Spleen (tissue), 13 donors: ENCODE measurements at regions of chr19 and their contacts with region 1.

Region 1: GRCh38 chr19:984165-984967 is at the start of gene WDR18:
- DNase-seq: peak; percentile 99
- H3K4me3 ChIP-seq: peak within 1 kb of the TSS; percentile 86 to 99 (median 96)
- H3K27ac ChIP-seq: peak within 1 kb of the TSS; percentile 55 to 95 (median 84)
- H3K4me1 ChIP-seq: peaks cover 16 to 50% (median 36%) of the 10 kb centered on the region in 6 donors
- H3K27me3 ChIP-seq: peaks cover 0 to 2% (median 0%) of the 10 kb centered on the region in 7 donors
- CTCF ChIP-seq: peak in 9 of 11 experiments; percentile 32 to 80 (median 60)
- POLR2A ChIP-seq: peak in 1 of 3 donors; percentile 9
- total RNA-seq, gene WDR18: 17.8 to 63.4 (median 28.2) TPM

Region 2: DNA sequence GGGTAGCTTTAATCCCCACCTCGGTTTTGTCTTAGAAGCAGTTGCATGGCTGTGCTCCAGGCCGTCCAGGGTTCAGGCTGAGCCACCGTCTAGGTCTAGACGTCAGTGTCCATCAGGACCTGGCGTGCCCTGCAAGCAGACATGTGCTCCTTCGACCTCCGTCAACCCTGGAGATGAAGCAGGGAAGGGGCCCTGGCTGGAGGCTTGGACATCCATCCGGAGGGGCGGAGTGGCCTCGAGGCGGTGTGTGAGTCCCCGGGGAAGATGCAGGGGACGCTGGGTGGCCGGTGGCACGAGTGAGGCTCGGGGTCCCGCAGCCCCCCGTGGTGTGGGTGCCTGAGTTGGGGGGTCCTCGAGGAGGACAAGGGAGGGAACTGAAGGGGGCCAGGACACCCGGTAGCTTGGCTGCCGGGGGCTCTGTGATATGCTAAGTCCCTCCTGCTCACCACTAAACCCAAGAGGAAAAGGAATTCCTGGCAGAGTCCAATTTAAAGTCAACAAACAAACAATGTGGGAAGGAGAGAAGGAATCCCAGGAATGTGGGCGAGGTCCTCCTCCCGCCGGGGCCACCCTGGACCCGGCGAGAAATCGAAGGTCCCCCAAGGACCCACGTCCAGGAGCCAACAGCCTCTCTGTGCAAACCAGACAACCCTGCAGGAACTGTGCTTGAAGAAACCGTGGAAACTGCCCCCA is 202.0 kb before region 1 on chr19:
- intact Hi-C with region 1: loop called (anchors 10 kb)
- DNase-seq: no peak
- H3K4me3 ChIP-seq: peak overlapping the region in 2 of 8 donors; percentile 3 to 21
- H3K27ac ChIP-seq: peak overlapping the region; percentile 13 to 68 (median 57)
- H3K4me1 ChIP-seq: peaks cover 0 to 36% (median 19%) of the 10 kb centered on the region in 6 donors
- H3K27me3 ChIP-seq: peaks cover 0 to 8% (median 0%) of the 10 kb centered on the region in 7 donors
- CTCF ChIP-seq: no peak
- POLR2A ChIP-seq: no peak

Region 3: DNA sequence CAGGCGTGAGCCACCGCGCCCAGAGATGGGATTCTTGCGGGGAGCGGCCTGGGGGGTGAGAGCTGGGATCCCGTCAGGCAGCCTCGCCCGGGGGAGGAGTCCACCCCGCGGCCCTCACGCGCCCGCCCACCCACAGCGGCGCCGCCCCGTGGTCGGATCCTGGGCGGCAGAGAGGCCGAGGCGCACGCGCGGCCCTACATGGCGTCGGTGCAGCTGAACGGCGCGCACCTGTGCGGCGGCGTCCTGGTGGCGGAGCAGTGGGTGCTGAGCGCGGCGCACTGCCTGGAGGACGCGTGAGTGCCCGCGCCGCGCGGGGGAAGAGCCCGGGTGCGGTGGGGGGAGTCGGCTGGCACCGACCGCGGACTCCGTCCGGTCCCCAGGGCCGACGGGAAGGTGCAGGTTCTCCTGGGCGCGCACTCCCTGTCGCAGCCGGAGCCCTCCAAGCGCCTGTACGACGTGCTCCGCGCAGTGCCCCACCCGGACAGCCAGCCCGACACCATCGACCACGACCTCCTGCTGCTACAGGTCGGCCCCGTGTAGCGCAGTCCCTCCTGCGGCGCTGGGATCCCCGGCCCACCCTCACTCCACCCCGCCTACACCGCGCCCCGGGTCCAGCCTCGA is 123.8 kb before region 1 on chr19:
- intact Hi-C with region 1: loop called (anchors 10 kb)
- DNase-seq: peak; percentile 90
- H3K4me3 ChIP-seq: peak overlapping the region in 7 of 8 donors; percentile 27 to 66 (median 42)
- H3K27ac ChIP-seq: peak overlapping the region in 2 of 8 donors; percentile 13 to 60
- H3K4me1 ChIP-seq: peaks cover 11 to 67% (median 48%) of the 10 kb centered on the region in 6 donors
- H3K27me3 ChIP-seq: peaks cover 0 to 63% (median 20%) of the 10 kb centered on the region in 7 donors
- CTCF ChIP-seq: peak in 8 of 11 experiments; percentile 9 to 45 (median 28)
- POLR2A ChIP-seq: no peak

Region 4: GRCh38 chr19:925526-926322 is 58.6 kb before region 1 on chr19 and contains the start of gene ARID3A:
- intact Hi-C with region 1: loop called (anchors 2 kb)
- DNase-seq: peak; percentile 94
- H3K4me3 ChIP-seq: peak within 1 kb of the TSS; percentile 43 to 90 (median 87)
- H3K27ac ChIP-seq: peak within 1 kb of the TSS; percentile 86 to 98 (median 95)
- H3K4me1 ChIP-seq: peaks cover 5 to 76% (median 46%) of the 10 kb centered on the region in 6 donors
- H3K27me3 ChIP-seq: peaks cover 0 to 8% (median 2%) of the 10 kb centered on the region in 7 donors
- CTCF ChIP-seq: peak in 2 of 11 experiments; percentile 13 to 20
- POLR2A ChIP-seq: peak in 1 of 3 donors; percentile 23
- total RNA-seq, gene ARID3A: 14.9 to 42.5 (median 22.6) TPM